ENCODE measurements at regions of chr1 and their contacts with region 1.

Region 1: DNA sequence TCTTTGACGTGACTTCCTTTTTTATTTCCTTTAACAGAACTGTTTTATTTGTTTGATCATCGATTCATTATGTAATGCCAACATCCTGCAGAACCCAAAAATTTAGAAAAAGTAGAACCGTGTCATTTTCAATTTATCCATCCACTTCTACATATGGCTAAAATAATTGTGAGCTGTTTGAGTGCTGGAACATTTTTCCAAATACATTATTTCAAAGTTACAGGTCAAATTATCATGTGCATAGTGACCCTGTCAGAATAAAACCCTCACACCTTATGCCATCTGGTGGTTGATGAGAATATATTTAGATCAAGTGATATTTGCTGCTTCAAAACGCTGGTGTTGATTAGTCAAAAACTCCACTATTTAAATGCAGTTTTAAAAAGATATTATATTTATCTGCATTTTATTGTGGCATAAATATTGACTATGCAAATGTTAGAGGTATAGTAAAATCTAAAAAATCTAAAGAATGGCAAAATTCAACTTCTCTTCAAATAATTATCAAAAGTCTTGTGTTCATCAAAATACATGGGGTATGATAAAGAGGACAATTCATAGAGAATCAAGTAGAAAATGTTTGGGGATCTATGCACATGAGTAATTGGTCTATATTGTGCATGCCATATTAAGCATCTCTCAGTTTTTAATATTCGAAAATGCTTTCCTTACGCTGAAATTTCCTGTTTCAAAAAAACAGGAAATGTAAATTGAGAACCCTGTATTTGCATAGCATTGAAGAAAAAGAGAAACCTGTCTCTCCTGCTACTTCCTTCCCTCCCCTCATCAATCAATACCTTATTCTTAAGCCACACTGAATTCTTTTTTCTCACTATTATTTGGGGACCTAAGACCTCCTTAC is 39.7 kb downstream of the UBE2U start:
- DNase-seq: no peak
- CTCF ChIP-seq: no peak

Region 2: GRCh38 chr1:63615768-63616420 is 627.2 kb before region 1 on chr1:
- CTCF ChIA-PET with region 1: interaction called, 14 read pairs
- POLR2A ChIA-PET with region 1: no interaction called
- DNase-seq: peak; percentile 65
- CTCF ChIP-seq: peak; percentile 59

Region 3: DNA sequence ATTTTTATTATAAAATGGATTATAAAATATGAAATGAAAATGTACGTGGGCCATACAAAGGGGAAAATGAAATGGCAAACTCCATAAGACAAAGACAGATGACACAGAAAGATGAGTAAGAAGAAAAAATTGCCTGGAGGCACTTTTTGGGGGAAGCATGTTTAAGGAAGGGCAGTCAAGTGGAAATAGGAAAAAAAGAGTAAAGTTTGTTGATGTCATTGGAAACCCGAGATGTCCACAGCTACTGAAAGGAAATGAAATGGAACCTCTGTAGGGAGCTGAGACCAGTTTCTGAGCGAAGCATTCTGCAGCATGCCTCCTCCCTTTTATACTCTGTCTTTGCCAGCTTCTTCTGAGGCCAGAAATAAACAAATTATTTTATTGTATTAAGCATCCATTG is 243.1 kb before region 1 on chr1:
- CTCF ChIA-PET with region 1: no interaction called
- POLR2A ChIA-PET with region 1: no interaction called
- DNase-seq: no peak
- CTCF ChIP-seq: no peak

Region 4: GRCh38 chr1:64268653-64269557 is 25.8 kb after region 1 on chr1:
- CTCF ChIA-PET with region 1: interaction called, 12 read pairs
- POLR2A ChIA-PET with region 1: no interaction called
- DNase-seq: peak; percentile 62
- CTCF ChIP-seq: peak; percentile 72

Region 5: DNA sequence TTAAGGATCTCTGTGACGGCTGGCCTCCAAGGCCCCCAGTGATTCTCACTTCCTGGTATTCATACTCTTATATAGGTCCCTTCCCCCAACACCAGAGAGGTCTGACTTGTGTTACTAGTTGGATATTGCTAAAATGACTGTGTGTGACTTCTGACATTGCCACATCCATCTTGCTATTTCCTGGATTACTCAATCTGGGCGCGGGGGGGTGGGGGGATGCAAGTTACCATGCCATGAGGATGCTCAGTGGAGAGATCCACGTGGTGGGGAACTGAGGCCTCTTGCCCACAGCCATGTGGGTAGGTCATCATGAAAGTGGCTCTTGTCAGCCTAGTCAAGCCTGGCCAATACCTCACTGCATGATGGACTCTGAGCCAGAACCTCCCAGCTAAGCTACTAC is 77.3 kb after region 1 on chr1:
- CTCF ChIA-PET with region 1: no interaction called
- POLR2A ChIA-PET with region 1: no interaction called
- DNase-seq: no peak
- CTCF ChIP-seq: no peak

Measured in GM10248 (cell line).